CD8-positive, alpha-beta T cell (primary cell): ENCODE measurements at regions of chr3 and their contacts with region 1.

Region 1: DNA sequence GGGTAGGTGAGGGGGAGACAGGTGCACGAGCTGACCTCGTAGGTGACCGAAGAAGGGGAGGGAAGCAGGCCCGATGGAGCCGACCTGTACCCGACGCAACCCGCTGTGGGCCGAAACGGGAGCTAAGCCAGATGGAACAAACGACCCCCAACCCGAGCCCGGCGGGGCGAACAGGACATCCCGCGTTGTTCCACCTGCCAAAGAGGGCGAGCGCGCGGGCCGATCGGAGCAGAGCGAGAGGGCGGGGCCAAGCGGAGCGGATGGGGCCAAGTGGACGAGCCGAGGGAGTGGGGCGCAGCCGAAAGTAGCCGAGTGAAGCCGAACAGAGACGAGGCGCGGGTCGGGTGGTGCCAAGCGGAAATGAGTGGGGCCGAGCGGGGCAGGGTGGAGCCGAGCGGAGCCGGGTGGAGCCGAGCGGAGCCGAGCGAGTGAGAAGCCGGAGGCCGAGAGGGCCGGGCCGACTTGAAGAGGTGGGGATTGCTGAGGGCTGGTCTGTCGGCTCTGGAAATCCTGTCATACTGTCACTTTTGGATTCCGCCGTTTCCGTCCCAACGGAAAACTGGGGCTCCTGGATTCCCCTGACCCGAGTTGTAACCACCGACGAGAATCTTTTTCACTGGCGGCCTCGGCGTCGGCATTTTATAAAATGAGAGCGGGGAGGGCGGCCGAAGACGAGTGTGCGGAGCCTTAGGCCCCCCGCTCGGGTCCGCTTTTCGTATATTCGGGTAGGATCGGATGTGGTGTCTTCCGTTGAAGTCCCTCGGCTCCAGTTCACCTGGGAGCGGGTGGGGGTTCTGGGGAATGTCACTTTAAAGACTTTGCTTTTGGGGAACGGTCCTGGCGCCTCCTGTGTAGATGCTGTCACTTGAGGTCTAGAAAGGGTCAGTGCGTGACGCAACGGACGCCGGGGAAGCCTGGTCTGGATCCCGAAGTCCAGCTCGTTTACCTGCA is 15.6 kb upstream of the WNT7A start:
- DNase-seq: peak; percentile 90 to 97 (median 93)
- ATAC-seq: peak; percentile 95
- H3K4me3 ChIP-seq: peak overlapping the region; percentile 70 to 72
- H3K4me3 Mint-ChIP-seq: peak overlapping the region; percentile 88
- H3K27ac ChIP-seq: peak overlapping the region; percentile 71 to 74
- H3K27ac Mint-ChIP-seq: peak overlapping the region; percentile 91
- H3K4me1 ChIP-seq: peaks cover 28% of the 10 kb centered on the region
- H3K4me1 Mint-ChIP-seq: peaks cover 35% of the 10 kb centered on the region
- H3K27me3 ChIP-seq: no peaks in the 10 kb centered on the region
- H3K27me3 Mint-ChIP-seq: no peaks in the 10 kb centered on the region
- CTCF ChIP-seq: no peak

Region 2: GRCh38 chr3:13012228-13012691 is 883.2 kb before region 1 on chr3:
- CTCF ChIA-PET with region 1: no interaction called
- POLR2A ChIA-PET with region 1: no interaction called
- intact Hi-C with region 1: loop called in 1 of 2 experiments (anchors 10 kb)
- DNase-seq: peak in 5 of 9 experiments; percentile 41 to 89 (median 70)
- ATAC-seq: peak; percentile 17
- H3K4me3 ChIP-seq: peak overlapping the region; percentile 4 to 12
- H3K4me3 Mint-ChIP-seq: peak overlapping the region; percentile 67
- H3K27ac ChIP-seq: peak overlapping the region; percentile 74 to 98
- H3K27ac Mint-ChIP-seq: peak overlapping the region; percentile 97
- H3K4me1 ChIP-seq: peaks cover 96% of the 10 kb centered on the region
- H3K4me1 Mint-ChIP-seq: peaks cover 80% of the 10 kb centered on the region
- H3K27me3 ChIP-seq: no peaks in the 10 kb centered on the region
- H3K27me3 Mint-ChIP-seq: no peaks in the 10 kb centered on the region
- CTCF ChIP-seq: no peak

Region 3: DNA sequence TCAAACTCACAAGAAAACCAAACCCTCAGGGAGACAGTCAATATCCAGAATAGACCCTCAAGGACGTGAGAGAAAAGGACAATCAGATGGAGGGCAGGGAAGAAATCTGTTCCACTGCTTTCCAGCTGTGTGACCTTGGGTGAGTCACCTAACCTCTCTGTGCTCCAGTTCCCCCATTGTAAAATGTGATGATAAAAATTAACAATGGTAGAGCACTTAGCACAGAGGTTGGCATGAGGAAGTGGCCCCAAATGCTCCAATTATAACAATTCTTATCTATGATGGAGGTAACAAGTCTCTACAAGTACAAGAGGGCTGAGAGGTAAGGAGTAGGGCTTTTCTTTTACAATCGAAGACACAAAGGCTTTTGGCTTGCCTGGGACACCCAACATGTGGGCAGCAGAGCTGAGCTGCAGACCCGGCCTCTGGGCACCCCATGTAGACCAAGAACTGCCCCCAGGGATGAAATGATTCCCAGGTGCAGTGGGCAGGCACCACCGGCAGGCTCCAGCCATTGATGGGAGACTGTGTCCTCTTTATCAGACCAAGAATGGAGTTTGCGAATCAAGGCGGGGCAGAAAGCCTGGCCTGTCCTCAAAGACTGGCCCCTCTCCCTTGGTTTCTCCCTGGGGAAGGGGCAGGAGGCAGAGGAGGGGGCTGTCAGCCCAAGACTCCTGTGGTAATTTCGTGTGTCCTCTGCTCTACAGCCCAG is 37.6 kb before region 1 on chr3:
- CTCF ChIA-PET with region 1: no interaction called
- POLR2A ChIA-PET with region 1: no interaction called
- intact Hi-C with region 1: no loop called
- DNase-seq: no peak
- ATAC-seq: no peak
- H3K4me3 ChIP-seq: no peak overlapping the region
- H3K4me3 Mint-ChIP-seq: no peak overlapping the region
- H3K27ac ChIP-seq: no peak overlapping the region
- H3K27ac Mint-ChIP-seq: no peak overlapping the region
- H3K4me1 ChIP-seq: peaks cover 6% of the 10 kb centered on the region
- H3K4me1 Mint-ChIP-seq: peaks cover 11% of the 10 kb centered on the region
- H3K27me3 ChIP-seq: peaks cover 0 to 2% of the 10 kb centered on the region in 2 experiments
- H3K27me3 Mint-ChIP-seq: peaks cover 7% of the 10 kb centered on the region
- CTCF ChIP-seq: no peak

Region 4: GRCh38 chr3:14144423-14145075 is 249.1 kb after region 1 on chr3:
- CTCF ChIA-PET with region 1: interaction called, 4 read pairs
- POLR2A ChIA-PET with region 1: interaction called, 4 read pairs
- intact Hi-C with region 1: loop called in 1 of 2 experiments (anchors 1 kb)
- DNase-seq: peak; percentile 52 to 98 (median 71)
- ATAC-seq: peak; percentile 69
- H3K4me3 ChIP-seq: peak overlapping the region; percentile 15 to 20
- H3K4me3 Mint-ChIP-seq: peak overlapping the region; percentile 66
- H3K27ac ChIP-seq: peak overlapping the region; percentile 95 to 96
- H3K27ac Mint-ChIP-seq: peak overlapping the region; percentile 98
- H3K4me1 ChIP-seq: peaks cover 55% of the 10 kb centered on the region
- H3K4me1 Mint-ChIP-seq: peaks cover 48% of the 10 kb centered on the region
- H3K27me3 ChIP-seq: no peaks in the 10 kb centered on the region
- H3K27me3 Mint-ChIP-seq: no peaks in the 10 kb centered on the region
- CTCF ChIP-seq: no peak

Region 5: DNA sequence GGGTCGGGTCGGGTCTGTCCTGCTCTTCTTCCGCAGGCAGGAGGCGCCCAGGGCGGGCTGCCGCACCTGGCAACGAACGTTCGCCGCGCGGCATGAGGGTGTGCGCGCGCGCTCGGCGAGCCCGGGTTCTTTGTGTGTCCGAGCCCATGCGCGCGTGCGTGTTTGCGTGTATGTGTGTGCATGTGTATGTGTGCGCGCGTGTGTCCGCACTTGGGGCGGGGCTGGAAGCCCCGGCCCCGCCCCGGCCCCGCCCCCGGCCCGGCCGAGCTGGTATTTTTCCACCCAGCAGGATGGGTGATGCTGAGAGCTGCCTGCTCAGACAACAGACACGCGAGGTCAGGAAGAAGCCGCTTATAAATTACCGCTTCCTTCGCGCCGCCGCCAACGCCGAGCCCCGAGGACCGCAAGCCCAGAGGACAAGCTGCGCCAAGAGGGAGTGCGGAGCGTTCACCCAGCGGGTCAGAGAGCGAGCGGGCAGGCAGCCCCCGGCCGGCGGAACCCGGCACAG is 506.9 kb after region 1 on chr3 and contains the start of gene SLC6A6:
- CTCF ChIA-PET with region 1: interaction called, 3 read pairs
- POLR2A ChIA-PET with region 1: interaction called, 4 read pairs
- intact Hi-C with region 1: loop called (anchors 1 kb)
- DNase-seq: peak; percentile 87 to 98 (median 95)
- ATAC-seq: peak; percentile 79
- H3K4me3 ChIP-seq: peak within 1 kb of the TSS; percentile 72 to 85
- H3K4me3 Mint-ChIP-seq: peak within 1 kb of the TSS; percentile 97
- H3K27ac ChIP-seq: peak within 1 kb of the TSS; percentile 70 to 91
- H3K27ac Mint-ChIP-seq: peak within 1 kb of the TSS; percentile 96
- H3K4me1 ChIP-seq: peaks cover 34% of the 10 kb centered on the region
- H3K4me1 Mint-ChIP-seq: peaks cover 46% of the 10 kb centered on the region
- H3K27me3 ChIP-seq: no peaks in the 10 kb centered on the region
- H3K27me3 Mint-ChIP-seq: no peaks in the 10 kb centered on the region
- CTCF ChIP-seq: peak; percentile 46
- total RNA-seq, gene SLC6A6: 25.8 to 30.9 TPM

Region 6: GRCh38 chr3:14548321-14548729 is 652.9 kb after region 1 on chr3:
- CTCF ChIA-PET with region 1: no interaction called
- POLR2A ChIA-PET with region 1: no interaction called
- intact Hi-C with region 1: loop called in 1 of 2 experiments (anchors 1 kb)
- DNase-seq: peak in 8 of 9 experiments; percentile 3 to 53 (median 36)
- ATAC-seq: no peak
- H3K4me3 ChIP-seq: no peak overlapping the region
- H3K4me3 Mint-ChIP-seq: no peak overlapping the region
- H3K27ac ChIP-seq: no peak overlapping the region
- H3K27ac Mint-ChIP-seq: no peak overlapping the region
- H3K4me1 ChIP-seq: no peaks in the 10 kb centered on the region
- H3K4me1 Mint-ChIP-seq: no peaks in the 10 kb centered on the region
- H3K27me3 ChIP-seq: no peaks in the 10 kb centered on the region
- H3K27me3 Mint-ChIP-seq: peaks cover 30% of the 10 kb centered on the region
- CTCF ChIP-seq: peak; percentile 25

Region 7: GRCh38 chr3:15098503-15099363 is 1203.3 kb after region 1 on chr3 and contains the start of gene RBSN:
- CTCF ChIA-PET with region 1: no interaction called
- POLR2A ChIA-PET with region 1: no interaction called
- intact Hi-C with region 1: loop called in 1 of 2 experiments (anchors 10 kb)
- DNase-seq: peak; percentile 87 to 98 (median 94)
- ATAC-seq: peak; percentile 76
- H3K4me3 ChIP-seq: peak within 1 kb of the TSS; percentile 71 to 76
- H3K4me3 Mint-ChIP-seq: peak within 1 kb of the TSS; percentile 88
- H3K27ac ChIP-seq: peak within 1 kb of the TSS; percentile 96 to 98
- H3K27ac Mint-ChIP-seq: peak within 1 kb of the TSS; percentile 95
- H3K4me1 ChIP-seq: peaks cover 16% of the 10 kb centered on the region
- H3K4me1 Mint-ChIP-seq: peaks cover 31% of the 10 kb centered on the region
- H3K27me3 ChIP-seq: no peaks in the 10 kb centered on the region
- H3K27me3 Mint-ChIP-seq: no peaks in the 10 kb centered on the region
- CTCF ChIP-seq: no peak
- total RNA-seq, gene RBSN: 41.9 to 48.1 TPM